Transverse colon (tissue), 4 donors: ENCODE measurements at regions of chr14 and their contacts with region 1.

Region 1: GRCh38 chr14:59507063-59507780 is 22.9 kb downstream of the JKAMP start:
- DNase-seq: peak; percentile 83
- H3K4me3 ChIP-seq: no peak overlapping the region
- H3K27ac ChIP-seq: no peak overlapping the region
- H3K4me1 ChIP-seq: peaks cover 0 to 14% (median 4%) of the 10 kb centered on the region in 4 donors
- H3K27me3 ChIP-seq: no peaks in the 10 kb centered on the region
- CTCF ChIP-seq: peak; percentile 70 to 91 (median 87)
- EP300 ChIP-seq: no peak
- POLR2A ChIP-seq: no peak

Region 2: GRCh38 chr14:59576332-59577294 is 69.4 kb after region 1 on chr14 and contains the start of gene CCDC175:
- in situ Hi-C with region 1: loop called in 1 of 4 experiments (anchors 10 kb)
- intact Hi-C with region 1: no loop called
- DNase-seq: peak; percentile 92
- H3K4me3 ChIP-seq: peak within 1 kb of the TSS; percentile 31 to 63 (median 46)
- H3K27ac ChIP-seq: peak within 1 kb of the TSS in 3 of 4 donors; percentile 25 to 27 (median 26)
- H3K4me1 ChIP-seq: peaks cover 0 to 11% (median 9%) of the 10 kb centered on the region in 4 donors
- H3K27me3 ChIP-seq: peaks cover 4% of the 10 kb centered on the region
- CTCF ChIP-seq: peak; percentile 63 to 88 (median 72)
- EP300 ChIP-seq: no peak
- POLR2A ChIP-seq: no peak
- total RNA-seq, gene CCDC175: 0.27 to 0.95 TPM in 2 of 4 donors, not detected in the others